ENCODE measurements at regions of chr9 and their contacts with region 1.

Region 1: DNA sequence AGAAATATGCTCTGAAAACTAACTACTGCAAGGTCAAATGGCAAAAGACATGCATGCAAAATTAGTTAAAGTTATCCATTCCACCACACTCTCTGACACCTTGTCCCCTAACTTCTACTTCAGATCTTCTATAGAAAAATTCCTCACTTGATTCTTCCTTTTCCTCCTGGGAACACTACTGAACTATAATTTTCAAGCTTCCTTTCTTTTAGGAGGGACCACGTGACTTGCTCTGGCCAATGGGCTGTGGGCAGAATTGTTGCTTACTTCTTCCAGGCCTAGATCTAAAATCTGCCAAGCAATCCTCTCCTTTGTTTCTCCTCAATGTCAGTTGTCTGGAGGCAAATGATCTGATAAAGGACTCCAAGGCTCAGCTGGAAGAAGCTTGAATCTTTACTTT is 441.0 kb downstream of the CDK5RAP2 start:
- DNase-seq: no peak
- H3K4me3 ChIP-seq: no peak overlapping the region
- H3K27ac ChIP-seq: no peak overlapping the region
- H3K4me1 ChIP-seq: no peaks in the 10 kb centered on the region
- H3K27me3 ChIP-seq: no peaks in the 10 kb centered on the region
- CTCF ChIP-seq: no peak
- EP300 ChIP-seq: no peak
- POLR2A ChIP-seq: no peak

Region 2: GRCh38 chr9:119667163-119667562 is 471.8 kb before region 1 on chr9:
- intact Hi-C with region 1: no loop called
- DNase-seq: no peak
- H3K4me3 ChIP-seq: no peak overlapping the region
- H3K27ac ChIP-seq: no peak overlapping the region
- H3K4me1 ChIP-seq: no peaks in the 10 kb centered on the region
- H3K27me3 ChIP-seq: no peaks in the 10 kb centered on the region
- CTCF ChIP-seq: no peak
- EP300 ChIP-seq: no peak
- POLR2A ChIP-seq: no peak

Region 3: GRCh38 chr9:120197605-120198004 is 58.6 kb after region 1 on chr9:
- intact Hi-C with region 1: loop called in 1 of 4 experiments (anchors 2 kb)
- DNase-seq: no peak
- H3K4me3 ChIP-seq: no peak overlapping the region
- H3K27ac ChIP-seq: no peak overlapping the region
- H3K4me1 ChIP-seq: no peaks in the 10 kb centered on the region
- H3K27me3 ChIP-seq: no peaks in the 10 kb centered on the region
- CTCF ChIP-seq: no peak
- EP300 ChIP-seq: no peak
- POLR2A ChIP-seq: no peak

Measured in ovary (tissue), 10 donors.